ENCODE measurements at regions of chr10 and their contacts with region 1.

Region 1: GRCh38 chr10:119131512-119132240 is 27.8 kb downstream of the DENND10 start:
- DNase-seq: peak; percentile 80
- H3K4me3 Mint-ChIP-seq: peak overlapping the region; percentile 80
- H3K27ac Mint-ChIP-seq: peak overlapping the region; percentile 99
- H3K4me1 Mint-ChIP-seq: peaks cover 44% of the 10 kb centered on the region
- H3K27me3 Mint-ChIP-seq: no peaks in the 10 kb centered on the region

Region 2: GRCh38 chr10:118128675-118129074 is 1003.0 kb before region 1 on chr10:
- CTCF ChIA-PET with region 1: no interaction called
- intact Hi-C with region 1: no loop called
- DNase-seq: no peak
- H3K4me3 Mint-ChIP-seq: no peak overlapping the region
- H3K27ac Mint-ChIP-seq: no peak overlapping the region
- H3K4me1 Mint-ChIP-seq: no peaks in the 10 kb centered on the region
- H3K27me3 Mint-ChIP-seq: peaks cover 23% of the 10 kb centered on the region

Region 3: GRCh38 chr10:118840071-118840775 is 291.5 kb before region 1 on chr10:
- CTCF ChIA-PET with region 1: no interaction called
- intact Hi-C with region 1: loop called (anchors 1 kb)
- DNase-seq: peak; percentile 92
- H3K4me3 Mint-ChIP-seq: peak overlapping the region; percentile 23
- H3K27ac Mint-ChIP-seq: peak overlapping the region; percentile 69
- H3K4me1 Mint-ChIP-seq: peaks cover 14% of the 10 kb centered on the region
- H3K27me3 Mint-ChIP-seq: no peaks in the 10 kb centered on the region

Region 4: GRCh38 chr10:119080521-119081260 is 51.0 kb before region 1 on chr10 and contains the start of gene EIF3A:
- CTCF ChIA-PET with region 1: interaction called, 3 read pairs
- intact Hi-C with region 1: loop called (anchors 1 kb)
- DNase-seq: peak; percentile 90
- H3K4me3 Mint-ChIP-seq: peak within 1 kb of the TSS; percentile 95
- H3K27ac Mint-ChIP-seq: peak within 1 kb of the TSS; percentile 98
- H3K4me1 Mint-ChIP-seq: peaks cover 33% of the 10 kb centered on the region
- H3K27me3 Mint-ChIP-seq: no peaks in the 10 kb centered on the region
- total RNA-seq, gene EIF3A: 113 to 120 TPM

Region 5: DNA sequence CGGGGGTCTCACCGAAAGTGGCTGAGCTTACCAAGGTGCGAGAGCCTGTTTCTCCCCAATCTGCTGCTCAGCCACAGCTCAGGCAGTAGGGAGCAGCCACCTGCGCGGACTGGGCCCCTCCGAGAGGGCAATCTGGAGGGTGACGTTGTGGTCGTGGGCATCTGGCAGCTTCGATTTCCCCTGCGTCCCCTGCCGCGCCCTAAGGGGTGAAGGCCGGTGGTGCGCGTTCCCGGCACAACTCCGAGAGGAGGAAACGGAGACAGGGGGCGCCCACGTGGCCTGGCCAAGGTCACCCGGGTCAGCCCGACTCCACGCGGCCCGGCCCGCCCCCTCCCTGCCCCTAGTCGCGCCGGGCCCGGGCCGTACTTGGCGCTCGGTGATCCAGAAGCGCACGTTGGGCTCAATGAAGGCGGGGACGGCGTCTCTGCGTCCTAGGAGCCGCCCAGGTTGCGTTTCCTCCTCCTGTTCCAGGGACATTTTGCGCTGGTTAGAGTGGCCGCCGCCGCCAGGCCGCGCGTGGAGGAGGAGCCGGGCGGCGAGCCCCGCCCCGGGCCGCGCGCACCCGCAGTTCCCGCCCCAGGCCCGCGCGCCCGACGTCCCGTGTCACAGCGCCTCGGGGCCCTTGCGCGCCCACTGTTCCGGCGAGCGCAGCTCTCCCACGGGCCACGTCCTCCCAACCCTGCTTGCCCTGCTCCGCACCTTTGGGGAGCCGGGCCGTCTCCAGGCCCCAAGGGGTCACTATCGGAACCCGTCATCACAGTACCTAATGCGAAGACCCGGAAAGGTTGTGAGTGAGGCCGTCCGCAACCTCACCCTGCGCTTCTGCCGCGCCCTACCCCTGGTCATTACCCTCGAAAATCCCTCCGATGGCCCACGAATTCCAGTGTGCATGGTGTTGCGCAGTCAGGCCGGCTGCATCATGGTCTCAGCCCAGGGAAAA is 33.8 kb after region 1 on chr10 and contains the start of gene SFXN4:
- CTCF ChIA-PET with region 1: interaction called, 4 read pairs
- intact Hi-C with region 1: loop called (anchors 1 kb)
- DNase-seq: peak; percentile 75
- H3K4me3 Mint-ChIP-seq: peak within 1 kb of the TSS; percentile 83
- H3K27ac Mint-ChIP-seq: peak within 1 kb of the TSS; percentile 85
- H3K4me1 Mint-ChIP-seq: peaks cover 42% of the 10 kb centered on the region
- H3K27me3 Mint-ChIP-seq: no peaks in the 10 kb centered on the region
- total RNA-seq, gene SFXN4: 46.1 to 51.7 TPM

Region 6: DNA sequence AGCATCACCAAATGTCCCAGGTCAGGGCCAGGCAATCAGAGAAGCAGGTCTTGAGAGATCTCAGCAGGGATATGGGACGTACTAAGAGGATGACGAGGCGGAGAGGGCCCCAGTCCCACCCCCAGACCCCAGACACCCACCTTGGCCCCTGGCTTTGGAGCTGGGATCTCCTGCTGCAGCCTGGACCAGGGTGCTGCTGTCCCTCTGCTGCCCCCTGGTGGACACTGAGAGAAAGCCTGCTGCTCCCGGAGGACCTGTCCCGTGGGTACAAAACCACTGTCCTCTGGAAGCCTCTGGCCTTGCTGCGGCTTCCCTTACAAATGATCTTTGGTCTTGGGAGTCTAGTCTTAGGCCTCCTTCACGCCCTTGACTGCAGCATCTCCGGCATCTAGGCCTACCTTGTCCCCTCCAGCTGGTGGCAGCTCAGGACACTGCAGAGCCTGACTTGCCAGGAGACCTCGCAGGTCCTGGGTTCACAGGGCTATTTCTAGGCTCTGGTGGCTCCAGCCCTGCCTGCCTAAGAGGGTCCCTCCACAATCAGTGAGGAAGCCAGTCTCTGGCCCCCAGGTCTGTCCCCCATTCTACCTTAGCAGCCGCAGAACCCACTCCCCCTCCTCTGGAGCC is 313.7 kb after region 1 on chr10:
- CTCF ChIA-PET with region 1: no interaction called
- intact Hi-C with region 1: loop called (anchors 2 kb)
- DNase-seq: peak; percentile 92
- H3K4me3 Mint-ChIP-seq: no peak overlapping the region
- H3K27ac Mint-ChIP-seq: no peak overlapping the region
- H3K4me1 Mint-ChIP-seq: peaks cover 9% of the 10 kb centered on the region
- H3K27me3 Mint-ChIP-seq: no peaks in the 10 kb centered on the region